Activated CD4-positive, alpha-beta T cell treated with anti-CD3 and anti-CD28 coated beads for 36 hours (primary cell): ENCODE measurements at regions of chr12 and their contacts with region 1.

Region 1: DNA sequence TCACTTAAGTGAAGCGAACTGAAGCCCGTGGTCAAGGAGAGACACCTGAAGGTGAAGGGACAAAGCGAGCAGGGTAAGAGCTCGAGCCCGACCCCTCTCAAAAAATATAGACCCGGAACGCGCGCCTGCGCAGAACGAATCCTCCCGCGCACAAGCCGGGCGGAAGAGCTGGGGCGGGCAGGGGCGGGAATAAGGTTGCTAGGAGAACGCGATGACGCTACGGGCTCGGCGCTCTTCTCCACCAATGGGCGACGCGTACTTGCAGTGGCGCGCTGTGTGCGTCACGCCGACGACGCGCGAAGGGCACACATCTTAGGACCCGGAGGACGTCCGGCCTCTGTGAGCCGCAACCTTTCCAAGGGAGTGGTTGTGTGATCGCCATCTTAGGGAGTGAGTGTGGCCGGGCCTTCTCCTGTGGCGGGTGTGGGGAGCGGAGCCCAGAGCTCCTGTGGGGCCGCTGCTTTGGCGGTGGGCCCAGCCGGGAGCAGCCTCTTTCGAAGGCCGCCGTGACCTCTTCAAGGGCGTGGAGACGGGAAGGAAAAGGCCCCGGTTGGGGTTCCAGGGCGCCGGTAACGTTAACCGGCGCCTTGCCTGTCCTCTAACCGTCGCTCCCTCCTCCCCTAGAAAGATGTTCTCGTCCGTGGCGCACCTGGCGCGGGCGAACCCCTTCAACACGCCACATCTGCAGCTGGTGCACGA is at the start of gene SLC25A3:
- DNase-seq: peak; percentile 97
- ATAC-seq: peak; percentile 97
- H3K4me3 Mint-ChIP-seq: peak within 1 kb of the TSS; percentile 97
- H3K27ac Mint-ChIP-seq: peak within 1 kb of the TSS; percentile 89
- H3K4me1 Mint-ChIP-seq: peaks cover 25% of the 10 kb centered on the region
- H3K27me3 Mint-ChIP-seq: no peaks in the 10 kb centered on the region
- total RNA-seq, gene SLC25A3: 426 to 591 TPM

Region 2: DNA sequence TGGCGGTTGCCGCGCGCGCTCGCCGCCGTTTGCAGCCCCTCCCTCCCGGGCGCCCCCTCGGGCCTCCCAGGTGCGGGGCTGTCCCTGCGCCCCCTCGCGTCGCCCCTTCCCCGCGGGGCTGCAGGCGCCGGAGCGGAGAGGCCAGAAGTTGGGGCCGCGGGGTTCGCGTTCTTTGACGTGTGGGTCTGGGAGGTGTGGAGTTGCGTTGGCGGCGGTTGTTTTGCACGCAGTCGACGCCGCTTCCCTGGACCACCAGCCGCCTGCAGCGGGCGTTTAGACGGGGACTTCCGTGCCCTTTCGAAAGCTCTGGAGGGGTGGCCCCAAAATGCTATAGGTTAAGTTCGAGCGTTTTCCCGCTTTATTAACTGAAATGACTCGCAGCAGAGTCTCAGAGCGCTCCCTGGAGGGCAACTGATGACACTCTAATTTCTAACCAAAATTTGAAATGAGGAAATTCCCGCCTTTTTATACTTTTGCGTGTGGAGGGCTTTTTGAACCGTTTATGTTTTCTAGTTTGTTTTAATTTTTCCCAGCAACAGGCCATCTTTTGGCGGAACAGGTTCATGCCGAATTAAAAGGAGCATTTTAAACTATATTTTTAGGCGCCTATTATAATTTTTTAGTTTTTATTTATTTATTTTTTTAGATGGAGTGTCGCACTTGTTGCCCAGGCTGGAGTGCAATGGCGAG is 77.2 kb before region 1 on chr12:
- CTCF ChIA-PET with region 1: interaction called, 4 read pairs
- POLR2A ChIA-PET with region 1: interaction called, 8 read pairs
- intact Hi-C with region 1: loop called (anchors 1 kb)
- DNase-seq: peak; percentile 94
- ATAC-seq: peak; percentile 76
- H3K4me3 Mint-ChIP-seq: peak overlapping the region; percentile 87
- H3K27ac Mint-ChIP-seq: peak overlapping the region; percentile 96
- H3K4me1 Mint-ChIP-seq: peaks cover 34% of the 10 kb centered on the region
- H3K27me3 Mint-ChIP-seq: no peaks in the 10 kb centered on the region

Region 3: DNA sequence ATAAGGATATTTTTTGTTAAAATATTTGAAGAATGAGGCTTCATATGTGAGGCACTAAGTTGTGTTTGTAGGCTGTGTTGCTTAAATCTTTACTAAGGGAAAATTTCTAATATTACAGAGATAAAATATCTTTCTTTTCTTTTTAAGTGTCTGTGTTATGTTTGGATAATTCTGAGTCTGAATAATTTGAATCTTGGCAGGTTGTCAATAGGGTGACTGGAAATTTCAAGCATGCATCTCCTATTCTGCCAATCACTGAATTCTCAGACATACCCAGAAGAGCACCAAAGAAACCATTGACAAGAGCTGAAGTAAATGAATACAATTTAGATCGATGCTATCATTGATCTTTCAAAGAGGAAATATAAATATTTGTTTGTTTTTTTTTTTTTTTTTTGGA is 48.7 kb before region 1 on chr12:
- CTCF ChIA-PET with region 1: no interaction called
- POLR2A ChIA-PET with region 1: interaction called, 3 read pairs
- intact Hi-C with region 1: loop called in 1 of 2 experiments (anchors 10 kb)
- DNase-seq: no peak
- ATAC-seq: no peak
- H3K4me3 Mint-ChIP-seq: no peak overlapping the region
- H3K27ac Mint-ChIP-seq: no peak overlapping the region
- H3K4me1 Mint-ChIP-seq: peaks cover 2% of the 10 kb centered on the region
- H3K27me3 Mint-ChIP-seq: no peaks in the 10 kb centered on the region

Region 4: GRCh38 chr12:98644711-98645402 is 51.4 kb after region 1 on chr12 and contains the starts of genes APAF1 and IKBIP:
- CTCF ChIA-PET with region 1: interaction called, 7 read pairs
- POLR2A ChIA-PET with region 1: interaction called, 9 read pairs
- intact Hi-C with region 1: loop called (anchors 1 kb)
- DNase-seq: peak; percentile 98
- ATAC-seq: peak; percentile 92
- H3K4me3 Mint-ChIP-seq: peak within 1 kb of the TSS; percentile 91
- H3K27ac Mint-ChIP-seq: peak within 1 kb of the TSS; percentile 94
- H3K4me1 Mint-ChIP-seq: peaks cover 16% of the 10 kb centered on the region
- H3K27me3 Mint-ChIP-seq: no peaks in the 10 kb centered on the region
- total RNA-seq, gene APAF1: 16.5 to 17.4 TPM
- total RNA-seq, gene IKBIP: 20.1 to 27.0 TPM

Region 5: DNA sequence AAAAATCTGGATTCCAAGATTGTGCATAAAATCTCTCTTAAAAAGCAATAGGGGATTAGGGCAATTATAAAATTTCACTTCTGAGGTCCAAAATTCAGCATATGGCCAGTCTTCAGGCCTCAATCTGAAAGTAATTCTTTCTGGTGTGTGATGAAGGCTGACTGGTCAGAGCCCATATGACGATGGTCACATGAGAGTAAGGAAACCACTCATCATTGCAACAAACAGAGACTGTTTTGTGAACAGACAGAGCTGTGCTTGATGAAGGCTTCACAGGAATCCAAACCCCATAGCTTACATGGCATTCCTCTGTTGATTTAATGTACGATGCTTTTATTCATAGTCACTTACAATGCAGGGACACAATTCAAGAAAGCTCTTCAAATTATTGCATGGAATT is 289.7 kb after region 1 on chr12:
- CTCF ChIA-PET with region 1: no interaction called
- POLR2A ChIA-PET with region 1: no interaction called
- intact Hi-C with region 1: no loop called
- DNase-seq: no peak
- ATAC-seq: no peak
- H3K4me3 Mint-ChIP-seq: no peak overlapping the region
- H3K27ac Mint-ChIP-seq: no peak overlapping the region
- H3K4me1 Mint-ChIP-seq: no peaks in the 10 kb centered on the region
- H3K27me3 Mint-ChIP-seq: peaks cover 6% of the 10 kb centered on the region

Region 6: GRCh38 chr12:100142851-100143559 is 1549.5 kb after region 1 on chr12 and contains the start of gene BLTP3B:
- CTCF ChIA-PET with region 1: no interaction called
- POLR2A ChIA-PET with region 1: no interaction called
- intact Hi-C with region 1: loop called in 1 of 2 experiments (anchors 2 kb)
- DNase-seq: peak; percentile 96
- ATAC-seq: peak; percentile 82
- H3K4me3 Mint-ChIP-seq: peak within 1 kb of the TSS; percentile 94
- H3K27ac Mint-ChIP-seq: peak within 1 kb of the TSS; percentile 97
- H3K4me1 Mint-ChIP-seq: peaks cover 33% of the 10 kb centered on the region
- H3K27me3 Mint-ChIP-seq: no peaks in the 10 kb centered on the region
- total RNA-seq, gene BLTP3B: 39.5 to 48.7 TPM